WTC11 (cell line): ENCODE measurements at regions of chr22 and their contacts with region 1.

Region 1: GRCh38 chr22:22745225-22746060 is 101.0 kb downstream of the GGTLC2 start:
- DNase-seq: peak; percentile 74
- ATAC-seq: peak; percentile 86
- H3K4me3 Mint-ChIP-seq: no peak overlapping the region
- H3K27ac Mint-ChIP-seq: no peak overlapping the region
- H3K4me1 Mint-ChIP-seq: peaks cover 19% of the 10 kb centered on the region
- H3K27me3 Mint-ChIP-seq: peaks cover 91% of the 10 kb centered on the region
- CTCF ChIP-seq: peak; percentile 35; the same call in 1 of the 2 replicates

Region 2: GRCh38 chr22:22666307-22667091 is 78.9 kb before region 1 on chr22:
- CTCF ChIA-PET with region 1: interaction called, 22 read pairs
- POLR2A ChIA-PET with region 1: no interaction called
- DNase-seq: peak; percentile 71
- ATAC-seq: peak; percentile 95
- H3K4me3 Mint-ChIP-seq: no peak overlapping the region
- H3K27ac Mint-ChIP-seq: no peak overlapping the region
- H3K4me1 Mint-ChIP-seq: no peaks in the 10 kb centered on the region
- H3K27me3 Mint-ChIP-seq: peaks cover 96% of the 10 kb centered on the region
- CTCF ChIP-seq: peak; percentile 23; the same call in 1 of the 2 replicates

Region 3: GRCh38 chr22:22720201-22720723 is 25.2 kb before region 1 on chr22:
- CTCF ChIA-PET with region 1: interaction called, 20 read pairs
- POLR2A ChIA-PET with region 1: no interaction called
- DNase-seq: peak; percentile 75
- ATAC-seq: peak; percentile 99
- H3K4me3 Mint-ChIP-seq: no peak overlapping the region
- H3K27ac Mint-ChIP-seq: no peak overlapping the region
- H3K4me1 Mint-ChIP-seq: no peaks in the 10 kb centered on the region
- H3K27me3 Mint-ChIP-seq: peaks cover 100% of the 10 kb centered on the region
- CTCF ChIP-seq: peak; percentile 65

Region 4: DNA sequence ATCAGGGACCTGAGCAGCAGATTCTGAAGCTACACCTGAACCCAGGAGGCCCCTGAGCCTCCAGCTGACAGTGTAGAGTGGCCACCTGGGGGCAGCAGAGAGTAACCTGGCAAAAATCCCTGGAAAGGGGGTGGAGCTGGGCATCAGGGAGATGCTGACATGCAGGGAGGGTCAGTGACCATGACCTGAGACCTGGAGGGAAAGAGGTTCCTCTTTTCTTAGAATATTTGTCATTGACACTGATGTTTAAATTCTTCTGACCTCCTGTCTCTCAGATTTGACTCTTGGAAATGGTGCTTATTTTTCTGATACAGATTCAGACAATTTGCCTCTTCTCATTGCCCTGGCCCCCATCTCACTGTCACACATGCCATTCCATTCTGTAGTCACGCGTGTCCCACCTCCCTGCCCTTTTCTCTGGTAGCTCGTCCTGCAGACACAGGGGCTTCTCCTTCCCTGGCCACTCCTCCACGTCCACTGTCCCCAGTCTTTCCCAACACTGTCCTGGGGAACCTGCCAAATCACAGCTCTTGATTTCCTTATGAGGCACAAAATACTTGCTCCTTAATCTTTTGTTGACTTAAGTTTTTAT is 24.9 kb after region 1 on chr22:
- CTCF ChIA-PET with region 1: interaction called, 58 read pairs
- POLR2A ChIA-PET with region 1: no interaction called
- DNase-seq: peak; percentile 84
- ATAC-seq: peak; percentile 88
- H3K4me3 Mint-ChIP-seq: no peak overlapping the region
- H3K27ac Mint-ChIP-seq: no peak overlapping the region
- H3K4me1 Mint-ChIP-seq: no peaks in the 10 kb centered on the region
- H3K27me3 Mint-ChIP-seq: peaks cover 99% of the 10 kb centered on the region
- CTCF ChIP-seq: peak; percentile 73; the same call in 1 of the 2 replicates

Region 5: DNA sequence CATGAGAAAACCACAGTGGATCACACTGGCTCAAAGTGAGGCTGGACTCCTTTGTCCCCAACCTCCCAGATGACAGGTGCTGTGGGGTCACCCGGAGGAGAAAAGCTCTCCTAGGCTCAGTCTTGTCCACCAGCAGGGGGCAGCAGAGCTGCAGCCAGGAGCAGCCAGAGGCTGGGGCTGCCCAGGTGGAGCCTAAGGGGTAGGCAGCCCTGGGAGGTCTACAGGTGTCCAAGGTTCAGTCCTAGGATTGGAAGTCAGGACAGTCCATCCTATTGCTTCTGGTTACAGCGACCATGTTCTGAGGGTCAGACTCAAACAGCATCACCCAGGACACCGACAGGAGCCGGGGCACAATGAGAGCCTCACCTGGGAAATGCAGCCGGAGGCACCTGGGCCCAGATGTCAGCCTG is 64.6 kb after region 1 on chr22:
- CTCF ChIA-PET with region 1: interaction called, 14 read pairs
- POLR2A ChIA-PET with region 1: no interaction called
- DNase-seq: peak; percentile 68
- ATAC-seq: peak; percentile 91
- H3K4me3 Mint-ChIP-seq: no peak overlapping the region
- H3K27ac Mint-ChIP-seq: no peak overlapping the region
- H3K4me1 Mint-ChIP-seq: no peaks in the 10 kb centered on the region
- H3K27me3 Mint-ChIP-seq: peaks cover 84% of the 10 kb centered on the region
- CTCF ChIP-seq: peak; percentile 66; the same call in 1 of the 2 replicates